Panc1 (cell line): ENCODE measurements at regions of chr7 and their contacts with region 1.

Region 1: GRCh38 chr7:2621948-2622640 is 9.7 kb upstream of the TTYH3 start:
- DNase-seq: no peak
- ATAC-seq: no peak
- H3K4me3 ChIP-seq: no peak overlapping the region
- H3K27ac ChIP-seq: no peak overlapping the region
- H3K4me1 ChIP-seq: peaks cover 18% of the 10 kb centered on the region
- H3K27me3 ChIP-seq: no peaks in the 10 kb centered on the region
- CTCF ChIP-seq: no peak

Region 2: DNA sequence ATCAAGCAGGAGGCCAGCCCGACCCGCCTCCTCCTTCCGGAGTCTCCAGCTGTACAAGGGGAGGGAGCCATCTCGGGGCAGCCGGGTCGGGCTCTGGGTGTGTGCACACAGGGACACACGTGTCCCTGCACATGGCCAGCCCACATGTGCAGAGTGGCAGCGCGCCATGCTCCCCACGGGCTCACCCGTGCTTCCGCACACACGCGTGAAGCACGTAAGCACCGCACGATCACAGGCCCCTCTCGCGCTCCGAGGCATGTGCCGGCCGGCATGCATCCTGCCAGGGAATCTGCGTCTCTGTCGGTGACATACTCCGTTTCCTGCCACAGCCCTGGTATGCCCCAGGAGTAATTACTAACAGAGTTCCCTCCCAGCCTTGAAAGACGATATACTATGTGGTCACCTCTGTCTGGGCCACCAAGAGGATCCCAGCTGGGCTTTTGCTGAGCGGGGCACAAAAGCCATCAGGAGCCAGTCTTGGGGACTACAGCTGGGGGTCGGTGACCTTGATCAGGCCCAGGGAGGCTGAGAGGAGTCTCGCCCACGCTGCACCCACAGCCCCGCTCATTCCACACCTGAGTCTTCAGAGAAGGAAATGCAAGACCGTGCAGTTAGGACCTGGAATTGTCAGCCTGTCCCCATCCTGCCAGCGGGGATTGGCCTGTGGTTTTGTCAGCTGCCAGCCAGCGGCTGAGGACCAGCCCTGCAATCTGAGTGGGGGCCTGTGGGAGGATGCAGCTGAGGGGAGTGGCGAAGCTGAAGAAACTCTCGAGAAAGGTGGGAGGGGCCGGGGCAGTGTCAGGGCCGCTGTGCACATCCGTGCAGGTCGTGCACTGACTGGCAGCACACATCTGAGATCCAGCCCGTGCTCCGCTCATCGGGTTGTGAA is 113.5 kb before region 1 on chr7:
- CTCF ChIA-PET with region 1: no interaction called
- POLR2A ChIA-PET with region 1: no interaction called
- in situ Hi-C with region 1: no loop called
- intact Hi-C with region 1: no loop called
- DNase-seq: no peak
- ATAC-seq: peak; percentile 28; the same call in 1 of the 2 replicates
- H3K4me3 ChIP-seq: no peak overlapping the region
- H3K27ac ChIP-seq: no peak overlapping the region
- H3K4me1 ChIP-seq: peaks cover 34% of the 10 kb centered on the region
- H3K27me3 ChIP-seq: no peaks in the 10 kb centered on the region
- CTCF ChIP-seq: no peak

Region 3: DNA sequence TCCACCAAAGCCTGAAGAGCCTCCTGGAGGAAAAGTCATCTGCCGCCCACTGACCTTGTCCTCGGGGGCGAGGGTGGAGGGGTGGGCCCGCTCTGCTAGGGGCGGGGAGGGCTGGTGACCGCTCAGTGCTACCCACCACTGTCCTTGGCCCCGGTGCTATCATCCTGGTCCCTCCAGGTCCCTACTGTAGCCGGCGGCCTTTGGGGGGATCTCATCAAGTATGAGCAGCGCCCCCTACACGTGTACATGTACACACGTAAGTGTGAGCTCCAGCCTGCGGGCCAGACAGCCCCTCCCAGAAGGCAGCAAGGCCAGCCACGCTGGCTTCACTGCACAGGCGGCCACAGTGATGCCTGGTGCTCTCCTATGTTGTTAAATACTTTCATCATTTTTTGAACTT is 29.2 kb after region 1 on chr7:
- CTCF ChIA-PET with region 1: interaction called, 11 read pairs
- POLR2A ChIA-PET with region 1: no interaction called
- in situ Hi-C with region 1: no loop called
- intact Hi-C with region 1: no loop called
- DNase-seq: no peak
- ATAC-seq: no peak
- H3K4me3 ChIP-seq: no peak overlapping the region
- H3K27ac ChIP-seq: no peak overlapping the region
- H3K4me1 ChIP-seq: peaks cover 6% of the 10 kb centered on the region
- H3K27me3 ChIP-seq: no peaks in the 10 kb centered on the region
- CTCF ChIP-seq: no peak